Common myeloid progenitor, CD34-positive (primary cell): ENCODE measurements at regions of chr3 and their contacts with region 1.

Region 1: GRCh38 chr3:66450390-66451022 is 50.3 kb downstream of the LRIG1 start:
- DNase-seq: peak in 2 of 3 donors; percentile 28 to 37
- H3K4me3 ChIP-seq: no peak overlapping the region
- H3K27ac ChIP-seq: no peak overlapping the region
- H3K4me1 ChIP-seq: peaks cover 4 to 19% (median 14%) of the 10 kb centered on the region in 4 experiments
- H3K27me3 ChIP-seq: no peaks in the 10 kb centered on the region

Region 2: DNA sequence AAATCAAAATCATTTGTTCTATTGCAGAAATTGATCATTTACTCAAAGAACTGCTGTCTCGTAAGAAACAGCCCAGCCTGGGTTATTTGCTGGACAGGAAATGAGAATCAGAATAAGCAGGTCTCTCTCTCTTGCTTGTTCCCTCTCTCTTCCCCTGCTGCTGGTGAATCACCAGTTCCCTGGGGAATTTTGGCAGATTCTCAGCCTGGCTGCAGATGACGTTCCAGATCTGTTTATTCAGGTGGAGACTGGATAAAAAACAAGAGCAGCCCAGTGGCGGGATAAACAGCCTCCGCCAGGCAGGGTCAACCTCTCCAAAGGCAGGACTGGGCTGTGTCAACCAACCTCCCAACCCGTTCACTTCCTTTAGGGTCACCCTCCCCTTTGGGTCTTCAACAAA is 21.8 kb before region 1 on chr3:
- CTCF ChIA-PET with region 1: no interaction called
- POLR2A ChIA-PET with region 1: no interaction called
- DNase-seq: no peak
- H3K4me3 ChIP-seq: no peak overlapping the region
- H3K27ac ChIP-seq: no peak overlapping the region
- H3K4me1 ChIP-seq: peaks cover 0 to 11% (median 6%) of the 10 kb centered on the region in 4 experiments
- H3K27me3 ChIP-seq: no peaks in the 10 kb centered on the region

Region 3: GRCh38 chr3:66463054-66463631 is 12.6 kb after region 1 on chr3:
- CTCF ChIA-PET with region 1: interaction called, 17 read pairs
- POLR2A ChIA-PET with region 1: interaction called, 3 read pairs
- DNase-seq: no peak
- H3K4me3 ChIP-seq: no peak overlapping the region
- H3K27ac ChIP-seq: no peak overlapping the region
- H3K4me1 ChIP-seq: peaks cover 0 to 7% (median 2%) of the 10 kb centered on the region in 4 experiments
- H3K27me3 ChIP-seq: no peaks in the 10 kb centered on the region